Right ventricle myocardium inferior (tissue), 1 donor: ENCODE measurements at regions of chr17 and their contacts with region 1.

Region 1: GRCh38 chr17:45317112-45317928 is 500 bp upstream of the MAP3K14 start:
- DNase-seq: peak; percentile 100
- ATAC-seq: peak; percentile 91

Region 2: GRCh38 chr17:45148183-45149036 is 168.9 kb before region 1 on chr17 and contains the start of gene HEXIM1:
- intact Hi-C with region 1: loop called (anchors 10 kb)
- DNase-seq: peak; percentile 100
- ATAC-seq: peak; percentile 80
- total RNA-seq, gene HEXIM1: 33.1 TPM

Region 3: GRCh38 chr17:45277216-45277849 is 40.0 kb before region 1 on chr17:
- intact Hi-C with region 1: loop called (anchors 2 kb)
- DNase-seq: peak; percentile 98
- ATAC-seq: peak; percentile 71

Region 4: DNA sequence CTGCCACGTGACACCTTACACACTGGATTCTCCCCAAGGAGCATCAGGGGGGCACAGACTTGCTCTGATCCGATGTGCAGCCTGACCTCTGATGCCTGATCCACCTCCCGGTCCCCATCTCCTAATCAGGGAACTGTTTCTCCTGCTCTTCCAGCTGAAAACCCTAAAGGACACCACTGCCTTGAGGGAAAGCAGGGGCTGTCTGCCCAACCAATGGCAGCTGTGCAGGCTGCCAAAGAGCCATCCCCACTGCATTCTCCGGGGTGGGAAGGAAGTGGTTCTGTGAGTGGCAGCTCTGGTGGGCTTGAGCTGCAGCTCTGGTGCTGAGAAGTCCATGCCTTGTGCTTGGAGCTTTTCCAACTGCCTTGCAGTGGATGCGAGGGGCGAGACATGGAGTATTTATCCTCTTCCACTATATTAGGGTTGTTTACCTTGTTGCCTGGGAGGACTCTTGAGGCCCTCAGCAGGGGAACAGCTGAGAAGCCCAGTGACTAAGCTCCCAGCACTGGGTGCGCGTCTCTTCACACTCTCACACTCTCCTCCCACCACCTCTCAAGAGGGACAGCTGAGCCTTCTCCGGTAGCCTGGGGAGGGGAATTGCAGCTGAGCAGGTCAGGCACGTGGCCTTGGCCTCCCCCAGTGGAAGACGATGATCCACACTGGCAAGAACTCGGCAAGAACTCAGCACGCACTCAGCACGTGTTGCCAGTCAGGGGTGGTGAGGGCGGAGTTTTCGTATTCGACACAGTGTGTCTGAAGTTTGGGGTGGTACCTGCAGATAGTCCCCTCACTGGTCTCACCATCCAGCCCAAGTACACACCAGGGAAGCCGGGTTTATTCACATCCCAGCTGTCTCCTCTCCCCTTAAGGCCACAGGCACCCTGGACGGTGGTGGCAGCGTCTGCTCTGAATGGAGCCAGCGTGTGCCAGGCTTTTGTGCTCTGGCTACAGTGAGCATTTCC is 34.4 kb before region 1 on chr17:
- intact Hi-C with region 1: loop called (anchors 2 kb)
- DNase-seq: no peak
- ATAC-seq: peak; percentile 70

Region 5: GRCh38 chr17:45371414-45372327 is 54.4 kb after region 1 on chr17:
- intact Hi-C with region 1: loop called (anchors 2 kb)
- DNase-seq: peak; percentile 88
- ATAC-seq: peak; percentile 93

Region 6: GRCh38 chr17:45385331-45385997 is 68.1 kb after region 1 on chr17:
- intact Hi-C with region 1: loop called (anchors 2 kb)
- DNase-seq: peak; percentile 95
- ATAC-seq: peak; percentile 93